Caco-2 (cell line): ENCODE measurements at regions of chr22 and their contacts with region 1.

Region 1: GRCh38 chr22:38681784-38682335 is at the start of gene TOMM22:
- DNase-seq: peak; percentile 87 to 92
- H3K4me3 ChIP-seq: peak within 1 kb of the TSS; percentile 56
- H3K4me3 Mint-ChIP-seq: peak within 1 kb of the TSS; percentile 95
- H3K27ac Mint-ChIP-seq: peak within 1 kb of the TSS; percentile 97
- H3K4me1 ChIP-seq: no peaks in the 10 kb centered on the region
- H3K4me1 Mint-ChIP-seq: no peaks in the 10 kb centered on the region
- H3K27me3 ChIP-seq: no peaks in the 10 kb centered on the region
- H3K27me3 Mint-ChIP-seq: no peaks in the 10 kb centered on the region
- CTCF ChIP-seq: peak in 1 of 2 experiments; percentile 77
- total RNA-seq, gene TOMM22: 113 and 114 TPM in 2 replicates

Region 2: DNA sequence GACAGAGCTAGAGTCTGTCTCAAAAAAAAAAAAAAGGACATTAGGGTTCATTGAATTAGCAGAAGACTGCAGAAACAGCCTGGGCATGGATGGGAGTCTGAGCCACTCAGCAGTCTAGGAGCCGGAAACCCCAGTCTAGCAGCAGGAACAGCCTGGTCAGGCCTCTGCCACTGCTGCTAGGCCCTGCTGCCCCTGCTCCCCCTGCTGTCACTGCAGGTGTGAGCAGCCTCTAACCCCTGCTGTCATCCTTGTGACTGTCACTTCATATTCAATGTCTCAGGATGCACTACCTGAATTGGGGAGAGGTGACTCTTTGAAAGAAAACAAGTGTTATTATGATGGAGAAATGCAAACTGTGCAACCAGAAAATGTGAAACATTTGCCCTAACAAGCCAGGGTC is 168.8 kb before region 1 on chr22:
- CTCF ChIA-PET with region 1: no interaction called
- POLR2A ChIA-PET with region 1: interaction called, 12 read pairs
- intact Hi-C with region 1: no loop called
- DNase-seq: peak in 1 of 2 experiments; percentile 62
- H3K4me3 ChIP-seq: no peak overlapping the region
- H3K4me3 Mint-ChIP-seq: no peak overlapping the region
- H3K27ac Mint-ChIP-seq: no peak overlapping the region
- H3K4me1 ChIP-seq: no peaks in the 10 kb centered on the region
- H3K4me1 Mint-ChIP-seq: peaks cover 13% of the 10 kb centered on the region
- H3K27me3 ChIP-seq: no peaks in the 10 kb centered on the region
- H3K27me3 Mint-ChIP-seq: no peaks in the 10 kb centered on the region
- CTCF ChIP-seq: peak in 1 of 2 experiments; percentile 65

Region 3: DNA sequence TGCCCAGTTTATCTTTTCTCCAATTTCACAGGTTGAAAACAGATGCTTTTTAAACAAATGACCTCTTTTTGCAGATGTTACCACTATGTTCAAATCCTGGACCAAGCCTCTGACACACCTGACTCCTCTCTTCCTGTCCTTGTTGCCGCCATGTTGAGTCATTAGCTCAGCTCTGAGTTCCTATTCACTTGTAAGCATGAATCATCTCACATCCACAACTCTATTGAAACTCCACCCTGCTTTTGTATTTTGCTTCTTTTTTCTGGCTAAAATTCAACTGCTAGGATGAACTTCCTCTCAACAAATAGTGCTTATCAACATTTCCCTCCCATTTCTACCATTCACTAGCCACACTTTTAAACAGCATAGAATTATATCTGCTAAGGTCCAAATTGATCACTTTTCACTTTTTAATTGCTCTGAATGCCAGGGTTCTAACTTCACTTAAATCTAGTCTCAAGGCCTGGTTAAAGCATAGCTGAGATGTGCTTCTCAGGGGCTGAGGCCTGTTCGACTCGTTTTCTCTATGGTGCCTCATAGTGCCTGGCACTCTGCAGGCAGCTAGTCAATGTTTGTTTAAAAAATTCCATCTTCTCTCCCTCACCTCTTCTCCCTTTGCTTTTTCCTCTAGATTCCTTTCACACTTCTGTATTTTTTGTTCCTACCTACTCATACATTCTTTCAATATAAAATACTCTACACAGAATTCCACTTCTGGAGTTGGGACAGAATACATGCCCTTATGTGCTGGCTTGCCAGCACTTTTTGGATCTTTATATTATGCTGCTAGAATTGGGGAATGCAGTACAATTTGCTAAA is 15.0 kb after region 1 on chr22:
- CTCF ChIA-PET with region 1: interaction called, 12 read pairs
- POLR2A ChIA-PET with region 1: interaction called, 24 read pairs
- intact Hi-C with region 1: loop called (anchors 1 kb)
- DNase-seq: peak; percentile 67 to 78
- H3K4me3 ChIP-seq: peak overlapping the region; percentile 3; the same call in 1 of the 2 replicates
- H3K4me3 Mint-ChIP-seq: peak overlapping the region; percentile 87
- H3K27ac Mint-ChIP-seq: peak overlapping the region; percentile 100
- H3K4me1 ChIP-seq: peaks cover 59% of the 10 kb centered on the region
- H3K4me1 Mint-ChIP-seq: peaks cover 37% of the 10 kb centered on the region
- H3K27me3 ChIP-seq: no peaks in the 10 kb centered on the region
- H3K27me3 Mint-ChIP-seq: no peaks in the 10 kb centered on the region
- CTCF ChIP-seq: no peak

Region 4: GRCh38 chr22:38705235-38706100 is 23.6 kb after region 1 on chr22 and contains the start of gene GTPBP1:
- CTCF ChIA-PET with region 1: interaction called, 4 read pairs
- POLR2A ChIA-PET with region 1: interaction called, 21 read pairs
- intact Hi-C with region 1: no loop called
- DNase-seq: peak; percentile 98 to 100
- H3K4me3 ChIP-seq: peak within 1 kb of the TSS; percentile 97
- H3K4me3 Mint-ChIP-seq: peak within 1 kb of the TSS; percentile 89
- H3K27ac Mint-ChIP-seq: peak within 1 kb of the TSS; percentile 88
- H3K4me1 ChIP-seq: peaks cover 13% of the 10 kb centered on the region
- H3K4me1 Mint-ChIP-seq: peaks cover 9% of the 10 kb centered on the region
- H3K27me3 ChIP-seq: no peaks in the 10 kb centered on the region
- H3K27me3 Mint-ChIP-seq: no peaks in the 10 kb centered on the region
- CTCF ChIP-seq: no peak
- total RNA-seq, gene GTPBP1: 47.2 and 48.0 TPM in 2 replicates

Region 5: DNA sequence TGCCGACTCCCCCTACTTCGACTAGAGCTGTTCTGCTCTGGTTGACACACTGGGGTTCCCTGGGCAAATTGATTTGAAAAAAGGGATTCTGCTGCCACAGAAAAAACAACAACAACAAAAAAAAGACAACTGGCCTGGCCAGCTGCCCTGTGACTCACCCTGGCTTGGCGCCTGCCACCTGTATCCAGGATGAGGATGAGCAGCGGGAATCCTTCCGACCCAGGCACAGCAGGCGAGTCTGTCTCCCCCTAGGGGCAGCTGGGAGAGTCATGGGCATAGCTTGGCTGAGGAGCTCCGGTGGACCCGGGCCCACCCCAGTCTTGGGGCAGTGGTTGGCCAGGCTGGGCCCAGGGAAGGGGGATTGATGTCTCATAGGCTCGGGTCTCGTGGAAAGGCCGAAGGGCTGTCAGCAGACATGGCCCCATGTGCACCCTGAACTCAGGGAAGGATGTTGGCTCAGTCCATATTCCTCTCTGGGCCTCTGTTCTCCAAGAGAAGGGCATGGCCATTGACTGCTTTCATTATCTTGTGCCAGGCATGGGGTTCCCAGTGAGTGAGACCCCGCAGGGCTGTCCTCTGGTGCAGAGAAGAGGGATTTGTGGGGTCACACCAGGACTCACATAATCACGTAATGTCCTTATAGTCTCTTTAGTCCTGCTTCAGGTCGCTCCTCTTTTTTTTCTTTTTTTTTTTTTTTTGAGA is 84.4 kb after region 1 on chr22:
- CTCF ChIA-PET with region 1: no interaction called
- POLR2A ChIA-PET with region 1: no interaction called
- intact Hi-C with region 1: no loop called
- DNase-seq: peak; percentile 70 to 76
- H3K4me3 ChIP-seq: no peak overlapping the region
- H3K4me3 Mint-ChIP-seq: no peak overlapping the region
- H3K27ac Mint-ChIP-seq: no peak overlapping the region
- H3K4me1 ChIP-seq: no peaks in the 10 kb centered on the region
- H3K4me1 Mint-ChIP-seq: no peaks in the 10 kb centered on the region
- H3K27me3 ChIP-seq: no peaks in the 10 kb centered on the region
- H3K27me3 Mint-ChIP-seq: no peaks in the 10 kb centered on the region
- CTCF ChIP-seq: peak; percentile 78 to 86

Region 6: DNA sequence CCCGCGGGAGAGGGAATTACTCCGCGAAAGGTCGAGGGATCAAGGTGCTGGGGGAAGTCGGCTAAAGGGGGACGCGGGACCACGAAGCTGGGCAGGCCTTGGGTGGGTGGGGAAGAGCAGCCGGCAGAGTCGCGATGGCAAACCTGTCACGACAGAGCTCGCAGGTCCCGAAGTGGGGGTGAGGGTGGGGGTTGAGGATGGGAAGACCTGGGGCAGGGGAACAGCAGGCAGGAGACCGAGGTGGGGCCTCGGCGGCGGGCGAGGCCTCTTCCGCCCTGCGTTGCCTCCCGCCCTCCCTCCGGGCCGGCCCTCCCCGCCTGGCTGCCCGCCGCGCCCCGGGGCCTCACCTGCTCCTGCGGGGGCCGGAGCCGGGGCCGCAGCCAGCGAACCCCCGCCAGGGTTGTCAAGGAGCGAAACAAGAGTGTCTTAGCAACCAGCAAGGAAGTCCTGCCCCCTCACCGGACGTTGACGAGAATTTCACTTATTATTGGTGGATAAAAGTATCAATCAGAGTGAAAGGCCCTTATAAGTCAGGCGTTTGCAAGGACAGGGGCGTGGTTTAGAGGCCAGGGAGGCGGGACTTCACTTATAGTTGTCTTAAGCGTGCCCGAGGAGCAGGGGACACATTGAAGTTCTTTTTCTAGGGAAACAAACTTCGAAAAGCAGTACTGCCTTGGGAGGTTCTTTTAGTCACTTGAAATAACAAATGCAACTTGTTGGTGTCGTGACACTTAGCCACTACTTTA is 112.0 kb after region 1 on chr22 and contains the start of gene DNAL4:
- CTCF ChIA-PET with region 1: no interaction called
- POLR2A ChIA-PET with region 1: no interaction called
- intact Hi-C with region 1: no loop called
- DNase-seq: peak; percentile 94 to 95
- H3K4me3 ChIP-seq: peak within 1 kb of the TSS; percentile 90
- H3K4me3 Mint-ChIP-seq: peak within 1 kb of the TSS; percentile 85
- H3K27ac Mint-ChIP-seq: peak within 1 kb of the TSS; percentile 71
- H3K4me1 ChIP-seq: peaks cover 8% of the 10 kb centered on the region
- H3K4me1 Mint-ChIP-seq: no peaks in the 10 kb centered on the region
- H3K27me3 ChIP-seq: no peaks in the 10 kb centered on the region
- H3K27me3 Mint-ChIP-seq: peaks cover 21% of the 10 kb centered on the region
- CTCF ChIP-seq: no peak
- total RNA-seq, gene DNAL4: 8.1 and 9.2 TPM in 2 replicates